ENCODE measurements at regions of chr7 and their contacts with region 1.

Region 1: GRCh38 chr7:2321020-2321419 is 6.8 kb upstream of the SNX8 start:
- DNase-seq: no peak
- H3K4me3 ChIP-seq: no peak overlapping the region
- H3K27ac ChIP-seq: no peak overlapping the region
- H3K4me1 ChIP-seq: no peaks in the 10 kb centered on the region
- H3K27me3 ChIP-seq: no peaks in the 10 kb centered on the region
- CTCF ChIP-seq: peak in 2 of 3 experiments; percentile 24 to 30; a peak in 2 of 4 replicates
- EP300 ChIP-seq: no peak
- POLR2A ChIP-seq: no peak
- RAD21 ChIP-seq: peak; percentile 19 to 43; a peak in 1 of 4 replicates

Region 2: DNA sequence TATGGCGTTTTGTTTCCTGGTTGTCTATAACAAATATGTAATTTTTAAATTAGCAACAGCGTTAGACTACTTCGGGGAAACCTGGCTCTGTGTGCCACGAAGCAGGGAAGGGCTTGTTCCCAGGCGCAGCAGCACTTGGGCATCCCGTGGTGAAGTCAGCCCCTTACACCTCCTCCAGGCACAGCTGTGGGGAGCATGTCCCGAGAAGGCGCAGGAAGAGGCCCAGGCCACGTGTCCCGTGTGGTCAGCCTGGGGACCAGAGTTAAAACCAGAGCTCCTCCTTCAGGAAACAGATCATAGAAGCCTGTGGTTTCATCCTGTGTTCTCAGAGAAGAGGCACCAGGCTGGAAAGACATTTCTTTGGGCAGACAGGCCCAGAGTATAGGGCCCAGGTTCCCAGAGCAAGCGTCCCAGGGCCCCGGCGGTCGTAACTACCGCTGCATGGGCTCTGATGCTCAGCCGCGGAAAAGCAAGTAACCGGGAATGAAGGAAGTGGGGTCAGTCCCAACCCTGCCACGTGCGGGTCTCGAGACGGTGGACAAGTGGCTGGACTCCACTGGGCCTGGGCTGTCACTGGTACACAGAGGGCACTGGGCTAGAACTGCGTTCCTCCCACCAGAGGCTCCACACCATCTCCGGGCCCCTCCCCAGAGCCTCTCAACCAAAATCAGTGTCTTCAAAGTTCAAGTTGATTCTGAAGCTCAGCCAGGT is 71.9 kb before region 1 on chr7:
- CTCF ChIA-PET with region 1: interaction called, 12 read pairs
- POLR2A ChIA-PET with region 1: interaction called, 4 read pairs
- DNase-seq: no peak
- H3K4me3 ChIP-seq: no peak overlapping the region
- H3K27ac ChIP-seq: no peak overlapping the region
- H3K4me1 ChIP-seq: peaks cover 0 to 8% (median 2%) of the 10 kb centered on the region in 4 experiments; a peak in 4 of 7 replicates
- H3K27me3 ChIP-seq: no peaks in the 10 kb centered on the region
- CTCF ChIP-seq: no peak
- EP300 ChIP-seq: no peak
- POLR2A ChIP-seq: no peak
- RAD21 ChIP-seq: no peak

Region 3: GRCh38 chr7:2336626-2337299 is 15.7 kb after region 1 on chr7:
- CTCF ChIA-PET with region 1: interaction called, 5 read pairs
- POLR2A ChIA-PET with region 1: interaction called, 21 read pairs
- DNase-seq: no peak
- H3K4me3 ChIP-seq: no peak overlapping the region
- H3K27ac ChIP-seq: no peak overlapping the region
- H3K4me1 ChIP-seq: no peaks in the 10 kb centered on the region
- H3K27me3 ChIP-seq: no peaks in the 10 kb centered on the region
- CTCF ChIP-seq: no peak
- EP300 ChIP-seq: no peak
- POLR2A ChIP-seq: no peak
- RAD21 ChIP-seq: no peak